Activated T-helper 1 cell treated with anti-CD3 and anti-CD28 coated beads, Interleukin-12 subunit alpha, Interleukin-12 subunit beta, Interleukin-2, Interleukin-4 antibody, amounts not matched to agents 30 ng/mL and 10 ng/mL and 1 ng/mL, durations not matched to agents 14 hours and 24 hours and 36 hours (primary cell): ENCODE measurements at regions of chr3 and their contacts with region 1.

Region 1: GRCh38 chr3:48465531-48466378 is 19.2 kb downstream of the ATRIP start:
- DNase-seq: peak; percentile 82
- H3K4me3 Mint-ChIP-seq: peak overlapping the region; percentile 93
- H3K27ac Mint-ChIP-seq: peak overlapping the region; percentile 98
- H3K4me1 Mint-ChIP-seq: peaks cover 44% of the 10 kb centered on the region
- H3K27me3 Mint-ChIP-seq: no peaks in the 10 kb centered on the region

Region 2: DNA sequence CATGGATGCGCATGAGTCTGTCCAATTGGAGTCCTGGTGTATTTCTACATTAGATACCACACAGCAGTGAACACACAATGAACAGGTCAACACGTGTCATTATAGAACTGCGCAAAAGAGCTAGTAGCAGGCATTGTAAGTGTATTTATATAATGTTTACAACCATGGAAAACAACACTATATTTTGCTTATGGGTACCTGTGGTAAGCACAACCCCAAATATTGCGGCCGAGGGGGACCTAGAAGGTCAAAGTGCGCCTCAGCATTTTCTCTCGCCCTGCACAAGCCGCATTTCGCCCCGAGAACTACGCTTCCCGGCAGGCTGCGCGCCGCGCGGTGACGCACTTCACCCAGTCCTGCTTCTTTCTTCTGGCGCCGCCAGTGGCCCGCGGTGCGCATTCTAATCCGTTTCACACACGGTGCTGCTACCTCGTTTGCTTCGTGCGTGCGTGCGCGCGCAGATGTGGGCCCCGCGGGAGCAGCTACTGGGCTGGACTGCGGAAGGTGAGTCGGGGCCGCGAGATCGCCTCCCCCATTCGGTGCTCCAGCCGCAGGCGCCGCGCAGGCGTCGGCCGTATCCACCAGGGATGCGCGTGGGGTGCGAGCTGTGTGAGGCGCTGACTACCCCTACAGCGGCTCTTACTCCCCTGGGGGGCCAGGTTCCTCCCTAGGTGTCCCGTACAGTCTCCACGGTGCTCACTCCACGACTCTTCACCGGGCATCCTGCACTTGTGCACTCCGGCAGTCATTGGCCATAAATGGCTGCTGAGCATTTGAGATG is 224.9 kb before region 1 on chr3 and contains the start of gene ZNF589:
- intact Hi-C with region 1: no loop called
- DNase-seq: peak; percentile 93
- H3K4me3 Mint-ChIP-seq: peak within 1 kb of the TSS; percentile 91
- H3K27ac Mint-ChIP-seq: peak within 1 kb of the TSS; percentile 95
- H3K4me1 Mint-ChIP-seq: peaks cover 19% of the 10 kb centered on the region
- H3K27me3 Mint-ChIP-seq: no peaks in the 10 kb centered on the region
- total RNA-seq, gene ZNF589: 33.0 and 34.2 TPM in 2 replicates

Region 3: DNA sequence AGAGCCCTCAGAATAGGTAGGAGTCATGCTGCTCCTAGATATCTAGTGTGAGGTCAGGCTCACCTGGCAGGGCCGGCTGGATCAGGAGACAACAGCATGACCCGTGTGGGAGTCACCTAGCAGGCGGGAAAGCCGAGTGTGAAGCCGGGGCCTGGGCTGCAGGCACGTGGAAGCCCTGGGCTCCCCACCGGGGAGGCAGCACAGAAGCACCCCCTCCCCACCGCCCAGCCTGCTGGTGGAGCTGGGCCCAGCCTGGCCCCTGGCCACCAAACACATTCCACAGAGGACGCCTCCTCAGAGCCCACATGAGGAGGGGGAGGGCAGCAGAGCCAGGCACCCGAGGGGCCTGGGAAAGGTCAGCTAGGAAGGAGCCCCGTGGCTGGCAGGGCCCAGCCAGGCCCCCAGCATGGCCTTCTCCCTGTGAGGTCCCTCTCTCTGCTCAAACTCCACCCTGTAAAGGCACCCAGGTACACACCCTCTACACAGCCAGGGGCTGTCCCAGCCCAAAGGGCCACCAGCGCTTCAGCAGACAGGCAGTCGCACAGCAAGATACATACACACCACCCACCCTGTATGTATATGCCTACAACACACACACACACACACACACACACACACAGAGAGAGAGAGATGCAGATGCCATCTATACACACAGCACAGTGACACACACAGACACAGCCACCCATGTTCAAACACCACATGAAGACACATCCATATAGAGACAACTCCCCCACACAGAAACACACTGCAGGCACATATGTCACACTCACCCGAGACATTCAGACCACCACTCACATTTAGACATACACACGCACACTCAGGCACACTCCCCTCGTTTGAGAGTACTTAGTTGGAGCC is 40.3 kb before region 1 on chr3:
- intact Hi-C with region 1: no loop called
- DNase-seq: no peak
- H3K4me3 Mint-ChIP-seq: no peak overlapping the region
- H3K27ac Mint-ChIP-seq: no peak overlapping the region
- H3K4me1 Mint-ChIP-seq: peaks cover 5% of the 10 kb centered on the region
- H3K27me3 Mint-ChIP-seq: peaks cover 19% of the 10 kb centered on the region

Region 4: GRCh38 chr3:48514436-48515227 is 48.9 kb after region 1 on chr3:
- intact Hi-C with region 1: no loop called
- DNase-seq: peak; percentile 64
- H3K4me3 Mint-ChIP-seq: peak overlapping the region; percentile 45
- H3K27ac Mint-ChIP-seq: no peak overlapping the region
- H3K4me1 Mint-ChIP-seq: peaks cover 57% of the 10 kb centered on the region
- H3K27me3 Mint-ChIP-seq: peaks cover 3% of the 10 kb centered on the region

Region 5: DNA sequence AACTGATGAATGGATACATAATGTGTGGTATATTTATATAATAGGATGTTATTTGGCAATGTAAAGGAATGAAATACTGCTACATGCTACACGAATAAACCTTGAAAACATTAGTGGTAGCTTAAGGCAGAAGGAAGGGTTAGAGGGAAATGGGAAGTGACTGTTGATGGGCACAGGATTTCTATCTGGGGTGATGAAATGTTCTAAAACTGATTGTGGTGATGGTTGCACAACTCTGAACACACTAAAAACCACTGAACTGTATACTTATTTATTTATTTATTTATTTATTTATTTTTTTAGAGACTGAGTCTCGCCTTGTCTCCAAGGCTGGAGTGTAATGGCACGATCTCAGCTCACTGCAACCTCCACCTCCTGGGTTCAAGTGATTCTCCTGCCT is 63.0 kb after region 1 on chr3:
- intact Hi-C with region 1: no loop called
- DNase-seq: no peak
- H3K4me3 Mint-ChIP-seq: no peak overlapping the region
- H3K27ac Mint-ChIP-seq: no peak overlapping the region
- H3K4me1 Mint-ChIP-seq: no peaks in the 10 kb centered on the region
- H3K27me3 Mint-ChIP-seq: no peaks in the 10 kb centered on the region

Region 6: GRCh38 chr3:48548729-48549705 is 83.3 kb after region 1 on chr3:
- intact Hi-C with region 1: loop called (anchors 1 kb)
- DNase-seq: peak; percentile 73
- H3K4me3 Mint-ChIP-seq: no peak overlapping the region
- H3K27ac Mint-ChIP-seq: no peak overlapping the region
- H3K4me1 Mint-ChIP-seq: peaks cover 32% of the 10 kb centered on the region
- H3K27me3 Mint-ChIP-seq: no peaks in the 10 kb centered on the region